Astrocyte of the cerebellum (primary cell): ENCODE measurements at regions of chr6 and their contacts with region 1.

Region 1: GRCh38 chr6:138773177-138774091 is at the start of gene CCDC28A:
- DNase-seq: peak; percentile 89
- H3K4me3 ChIP-seq: peak within 1 kb of the TSS; percentile 79
- CTCF ChIP-seq: no peak

Region 2: DNA sequence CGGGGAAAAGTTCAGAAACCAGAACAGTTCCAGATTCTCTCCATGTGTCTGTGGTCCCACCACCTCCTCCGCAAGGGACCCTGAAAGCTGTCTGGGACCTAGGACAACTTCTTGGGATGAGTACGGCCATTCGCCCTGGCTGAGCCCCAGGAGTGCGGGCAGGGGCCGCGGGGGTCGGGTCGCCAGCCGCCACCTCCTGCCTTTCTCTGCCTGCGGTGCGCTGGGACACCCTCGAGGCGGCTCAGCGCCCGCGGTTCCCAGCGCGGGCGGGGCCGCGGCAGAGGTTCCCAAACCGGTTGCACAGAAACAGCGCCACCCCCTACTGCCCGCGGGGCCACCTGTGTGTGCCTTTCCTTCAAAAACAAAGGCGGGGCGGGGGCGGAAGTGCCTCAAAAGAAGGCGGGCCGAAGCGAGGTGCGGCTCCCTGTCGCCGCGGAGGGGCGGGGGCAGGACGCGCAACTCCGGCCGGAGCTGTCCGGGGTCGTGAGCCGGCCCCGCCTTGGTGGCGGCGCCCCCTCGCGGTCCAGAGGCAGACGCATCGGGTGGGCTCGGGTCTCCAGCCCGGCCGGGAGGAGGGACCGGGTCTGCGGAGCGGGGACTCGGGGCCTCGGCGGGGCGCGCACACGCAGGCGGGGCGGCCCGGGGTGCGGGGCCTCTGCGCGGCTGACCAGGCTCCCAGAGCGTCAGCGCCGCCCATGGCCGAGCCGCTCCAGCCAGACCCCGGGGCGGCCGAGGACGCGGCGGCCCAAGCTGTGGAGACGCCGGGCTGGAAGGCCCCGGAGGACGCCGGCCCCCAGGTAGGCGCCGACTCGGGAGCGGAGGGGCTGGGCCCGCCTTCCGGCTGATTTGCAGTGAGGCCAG is 369.4 kb before region 1 on chr6 and contains the start of gene HEBP2:
- in situ Hi-C with region 1: loop called (anchors 25 kb)
- DNase-seq: peak; percentile 65
- H3K4me3 ChIP-seq: peak within 1 kb of the TSS; percentile 86
- CTCF ChIP-seq: peak; percentile 57

Region 3: DNA sequence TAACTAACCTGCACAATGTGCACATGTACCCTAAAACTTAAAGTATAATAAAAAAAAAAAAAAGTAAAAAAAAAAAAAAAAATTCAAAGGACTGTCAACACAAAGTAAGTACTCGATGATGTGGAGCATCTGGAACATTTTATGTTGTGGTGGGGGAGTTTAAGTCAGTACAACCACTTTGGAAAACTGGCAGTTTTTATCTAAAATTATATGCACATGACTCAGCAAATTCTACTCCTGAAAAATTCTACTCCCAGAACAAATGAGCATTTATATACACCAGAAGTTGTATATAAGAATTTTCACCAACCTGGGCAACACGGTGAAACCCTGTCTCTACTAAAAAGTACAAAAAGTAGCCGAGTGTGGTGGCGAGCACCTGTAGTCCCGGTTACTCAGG is 36.8 kb before region 1 on chr6:
- in situ Hi-C with region 1: no loop called
- DNase-seq: no peak
- H3K4me3 ChIP-seq: no peak overlapping the region
- CTCF ChIP-seq: no peak